Heart right ventricle (tissue), 16 donors: ENCODE measurements at regions of chr2 and their contacts with region 1.

Region 1: DNA sequence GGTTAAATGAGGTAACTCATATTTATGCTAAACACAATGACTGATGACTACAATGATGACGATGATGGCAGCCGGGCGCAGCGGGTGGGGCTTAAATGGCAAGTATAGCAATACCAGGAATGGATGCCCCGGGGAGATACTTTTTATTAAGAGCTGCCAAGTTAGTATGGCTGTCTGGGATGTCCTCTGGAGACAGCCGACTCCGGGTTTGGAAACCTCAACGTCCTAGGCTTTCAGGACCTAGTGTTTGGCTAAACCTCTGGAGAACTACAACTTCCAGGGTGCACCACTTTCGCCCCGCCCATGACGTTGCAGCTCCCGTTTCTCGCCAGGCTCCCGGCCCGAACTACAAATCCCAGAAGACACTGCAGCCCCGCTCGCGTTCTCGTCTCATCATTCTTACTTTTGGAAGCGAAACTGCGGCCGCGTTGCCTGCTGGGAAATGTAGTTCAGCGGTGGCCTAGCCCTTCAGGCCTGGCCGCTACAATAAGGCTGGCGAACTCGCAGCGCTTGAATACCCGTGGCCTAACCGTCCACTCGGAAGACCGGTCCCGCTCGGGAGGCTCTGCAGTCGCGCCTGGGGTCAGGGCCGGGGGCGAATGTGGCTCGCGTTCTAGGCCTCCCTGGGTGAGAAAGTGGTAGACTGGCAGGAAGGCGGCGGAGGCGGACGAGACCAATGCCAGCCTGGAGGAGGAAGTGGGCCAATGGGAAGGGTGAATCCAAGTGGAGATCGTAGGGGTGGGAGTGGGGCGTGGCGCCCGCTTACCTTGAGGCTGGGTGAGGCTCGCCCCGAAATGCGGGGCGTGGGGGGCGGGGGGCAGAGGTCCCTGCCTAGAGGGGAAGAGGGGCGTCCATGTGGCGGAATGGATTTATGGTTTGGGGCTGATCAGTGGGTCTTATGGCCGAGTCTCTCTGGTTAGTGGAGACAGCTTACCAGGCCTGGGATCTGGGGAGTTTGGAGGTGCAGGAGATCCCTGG is at the start of gene SMARCAL1:
- DNase-seq: peak; percentile 99 to 100
- ATAC-seq: peak; percentile 93 to 98 (median 96)
- H3K4me3 ChIP-seq: peak within 1 kb of the TSS; percentile 45 to 81 (median 68)
- H3K27ac ChIP-seq: peak within 1 kb of the TSS; percentile 77 to 98 (median 96)
- H3K4me1 ChIP-seq: peaks cover 0 to 31% (median 9%) of the 10 kb centered on the region in 9 donors
- H3K27me3 ChIP-seq: peaks cover 0 to 14% (median 3%) of the 10 kb centered on the region in 7 donors
- CTCF ChIP-seq: no peak
- total RNA-seq, gene SMARCAL1: 7.5 to 14.8 (median 9.8) TPM

Region 2: DNA sequence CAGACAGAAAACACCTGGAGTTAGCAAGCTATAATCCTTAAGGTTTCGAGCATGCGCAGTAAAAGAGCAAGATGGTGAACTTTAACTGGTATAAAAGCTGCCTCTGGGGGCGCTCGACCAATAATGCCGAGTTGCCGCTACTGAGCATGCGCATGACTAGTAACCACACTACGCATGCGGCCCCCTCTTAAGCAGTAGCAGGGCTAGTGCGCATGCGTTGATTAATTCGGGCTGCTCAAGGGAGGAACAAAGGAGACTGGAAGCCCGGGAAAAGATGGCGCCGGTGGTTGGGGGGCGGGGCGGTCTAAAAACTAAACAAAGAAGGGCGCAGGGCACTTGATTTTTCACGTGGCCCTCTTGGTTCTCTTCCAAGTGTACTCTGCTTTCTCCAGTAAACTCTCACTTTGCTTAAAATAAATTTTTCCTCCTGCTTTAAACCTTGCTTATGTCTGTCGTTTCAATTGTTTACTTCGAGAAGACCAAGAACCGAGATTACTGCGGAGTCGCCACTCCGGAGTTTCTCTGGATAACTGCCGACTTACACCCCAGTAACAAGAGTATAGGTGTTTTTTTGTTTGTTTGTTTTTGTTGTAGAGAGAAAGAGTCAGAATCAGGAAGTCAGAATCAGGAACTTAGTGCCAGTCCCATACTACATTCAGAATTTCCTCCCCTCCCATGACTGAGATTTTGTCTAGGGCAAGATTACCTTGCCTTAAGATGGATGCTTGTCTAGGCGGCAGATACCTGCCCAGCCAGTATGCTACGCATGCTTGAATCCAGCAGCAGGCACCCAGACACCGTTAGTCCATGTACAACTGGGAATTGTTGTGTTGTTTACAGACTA is 297.4 kb before region 1 on chr2:
- intact Hi-C with region 1: loop called in 3 of 10 experiments (anchors 5 to 10 kb)
- DNase-seq: peak; percentile 93 to 99
- ATAC-seq: peak; percentile 96 to 99 (median 98)
- H3K4me3 ChIP-seq: peak overlapping the region; percentile 11 to 60 (median 54)
- H3K27ac ChIP-seq: peak overlapping the region; percentile 31 to 91 (median 80)
- H3K4me1 ChIP-seq: peaks cover 3 to 89% (median 46%) of the 10 kb centered on the region in 9 donors
- H3K27me3 ChIP-seq: no peaks in the 10 kb centered on the region
- CTCF ChIP-seq: peak; percentile 77 to 96 (median 88)

Region 3: DNA sequence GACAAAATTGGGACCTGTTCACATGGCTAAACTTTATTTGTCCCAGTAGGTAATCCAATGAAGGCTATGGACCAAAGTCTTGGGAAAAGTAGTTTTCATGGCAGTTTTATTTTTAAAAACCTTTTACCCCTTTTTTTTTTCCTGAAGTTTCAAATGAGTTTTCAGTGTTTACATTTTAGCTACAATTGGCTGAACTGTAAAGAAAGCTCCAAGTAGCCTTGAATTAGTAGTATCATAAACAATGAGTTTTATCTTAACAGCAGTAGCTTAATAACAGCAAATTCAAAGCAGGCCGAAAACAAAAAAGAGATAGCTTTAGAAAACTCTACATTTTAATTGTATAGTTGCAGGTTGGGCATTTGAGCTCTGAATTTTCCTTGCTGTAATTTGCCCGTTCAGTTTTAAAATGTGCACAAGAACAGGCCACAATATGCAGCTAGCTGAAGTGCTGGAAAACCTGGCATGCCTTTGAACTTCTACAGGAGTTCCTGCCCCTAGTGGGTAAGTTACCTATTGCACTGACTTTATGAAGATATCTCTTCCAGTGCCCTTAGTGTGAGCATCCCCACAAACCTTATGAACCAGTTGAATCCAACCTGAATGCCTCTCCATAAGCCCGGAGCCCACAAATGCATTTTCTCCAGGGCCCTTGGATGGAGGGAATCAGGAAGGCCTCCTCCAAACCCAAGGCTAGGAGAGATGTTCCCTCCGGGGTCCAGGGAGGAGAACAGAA is 196.5 kb before region 1 on chr2:
- intact Hi-C with region 1: loop called in 4 of 10 experiments (anchors 5 to 10 kb)
- DNase-seq: no peak
- ATAC-seq: no peak
- H3K4me3 ChIP-seq: no peak overlapping the region
- H3K27ac ChIP-seq: no peak overlapping the region
- H3K4me1 ChIP-seq: peaks cover 0 to 29% (median 8%) of the 10 kb centered on the region in 9 donors
- H3K27me3 ChIP-seq: no peaks in the 10 kb centered on the region
- CTCF ChIP-seq: peak in 1 of 9 donors; percentile 5

Region 4: DNA sequence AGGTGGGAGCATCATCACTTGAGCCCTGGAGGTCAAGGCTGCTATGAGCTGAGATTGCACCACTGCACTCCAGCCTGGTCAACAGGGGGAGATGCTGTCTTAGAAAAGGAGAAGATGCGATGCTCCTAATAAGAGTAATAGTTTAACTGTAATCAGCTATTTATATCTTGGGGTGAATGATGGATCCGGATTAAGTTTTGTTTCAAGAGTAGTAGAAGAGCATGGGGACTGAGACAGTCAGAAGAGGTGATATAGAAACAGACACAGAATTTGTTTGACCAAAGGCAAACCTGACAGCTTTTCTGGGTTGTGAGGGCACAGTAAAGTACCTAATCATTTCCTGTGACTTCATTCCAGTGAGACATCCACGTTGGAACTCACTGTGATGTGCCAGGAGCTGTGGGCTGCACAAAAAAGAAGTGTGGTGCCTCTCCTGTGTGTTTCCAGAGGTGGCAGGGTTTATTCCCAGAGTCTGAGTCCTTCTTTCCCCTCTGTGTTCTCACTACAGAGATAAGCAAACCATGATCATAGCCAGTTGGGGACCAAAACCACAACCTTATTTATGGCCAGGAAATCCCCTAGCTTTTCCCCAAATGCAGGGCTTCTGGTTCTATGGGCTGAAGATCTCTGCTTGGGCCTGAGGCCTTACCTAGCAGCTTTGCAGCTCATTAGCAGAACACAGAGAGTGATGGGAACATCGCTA is 189.5 kb before region 1 on chr2:
- intact Hi-C with region 1: loop called in 4 of 10 experiments (anchors 5 to 10 kb)
- DNase-seq: no peak
- ATAC-seq: no peak
- H3K4me3 ChIP-seq: no peak overlapping the region
- H3K27ac ChIP-seq: no peak overlapping the region
- H3K4me1 ChIP-seq: peaks cover 0 to 11% (median 5%) of the 10 kb centered on the region in 9 donors
- H3K27me3 ChIP-seq: no peaks in the 10 kb centered on the region
- CTCF ChIP-seq: peak in 4 of 9 donors; percentile 7 to 35 (median 22)

Region 5: DNA sequence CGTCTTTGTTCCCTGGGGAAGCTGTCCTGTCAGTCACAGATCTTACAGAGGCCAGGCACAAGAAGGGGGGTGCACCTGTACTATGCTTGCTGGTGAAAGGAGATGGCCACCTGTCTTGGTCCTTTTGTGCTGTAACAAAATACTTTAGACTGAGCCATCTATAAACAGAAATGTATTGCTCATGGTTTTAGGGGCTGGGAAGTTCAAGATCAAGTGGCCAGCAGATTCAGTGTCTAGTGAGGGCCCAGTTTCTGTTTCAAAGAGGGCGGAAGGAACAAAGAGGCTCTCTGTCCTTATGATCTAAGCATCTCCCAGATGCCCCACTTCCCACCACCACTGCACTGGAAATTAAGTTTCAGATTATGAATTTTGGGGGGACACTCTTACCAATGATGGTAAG is 50.8 kb after region 1 on chr2:
- intact Hi-C with region 1: no loop called
- DNase-seq: no peak
- ATAC-seq: no peak
- H3K4me3 ChIP-seq: no peak overlapping the region
- H3K27ac ChIP-seq: no peak overlapping the region
- H3K4me1 ChIP-seq: peaks cover 0 to 5% (median 0%) of the 10 kb centered on the region in 9 donors
- H3K27me3 ChIP-seq: no peaks in the 10 kb centered on the region
- CTCF ChIP-seq: no peak

Region 6: GRCh38 chr2:216486708-216487107 is 74.4 kb after region 1 on chr2:
- intact Hi-C with region 1: no loop called
- DNase-seq: no peak
- ATAC-seq: peak in 7 of 8 donors; percentile 37 to 61 (median 50)
- H3K4me3 ChIP-seq: no peak overlapping the region
- H3K27ac ChIP-seq: peak overlapping the region in 1 of 10 donors; percentile 73
- H3K4me1 ChIP-seq: peaks cover 0 to 35% (median 0%) of the 10 kb centered on the region in 9 donors
- H3K27me3 ChIP-seq: no peaks in the 10 kb centered on the region
- CTCF ChIP-seq: no peak